ENCODE measurements at regions of chr6 and their contacts with region 1.

Region 1: GRCh38 chr6:41367700-41368099 is 32.3 kb downstream of the NCR2 start:
- DNase-seq: no peak
- H3K4me3 ChIP-seq: no peak overlapping the region
- H3K27ac ChIP-seq: no peak overlapping the region
- H3K4me1 ChIP-seq: peaks cover 0 to 3% of the 10 kb centered on the region in 2 donors
- H3K27me3 ChIP-seq: peaks cover 0 to 28% of the 10 kb centered on the region in 2 donors
- CTCF ChIP-seq: peak in 2 of 3 donors; percentile 43 to 46
- POLR2A ChIP-seq: no peak

Region 2: DNA sequence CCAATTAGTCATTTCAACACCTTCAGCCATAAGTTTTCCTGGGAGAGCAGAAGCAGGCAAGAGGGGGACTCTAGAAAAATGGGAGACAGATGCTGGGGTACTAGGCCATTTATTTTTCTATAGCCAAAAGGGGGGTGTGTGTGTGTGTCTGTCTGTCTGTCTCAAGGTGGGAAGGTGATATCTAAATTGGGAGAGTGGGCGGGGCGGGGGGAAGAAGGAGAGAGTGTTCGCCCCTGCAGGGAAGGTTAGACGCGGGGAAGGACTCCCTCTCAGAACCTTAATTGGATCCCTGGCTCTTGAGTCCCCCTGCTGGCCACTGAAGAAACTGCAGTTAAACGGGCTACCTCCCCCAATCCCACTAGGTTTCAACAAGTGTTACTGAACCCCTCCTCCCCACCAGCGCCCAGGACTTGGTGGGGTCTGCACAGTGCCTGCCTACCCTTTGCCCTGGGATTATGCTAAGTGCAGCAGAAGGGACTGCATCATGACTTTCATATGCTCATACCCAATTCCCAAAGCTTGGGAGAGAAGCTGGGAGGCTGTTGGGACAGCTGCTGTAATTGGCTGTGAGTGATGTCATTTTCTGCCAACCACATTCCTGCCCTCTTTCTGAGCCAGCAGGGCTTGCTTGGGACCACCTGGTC is 224.3 kb after region 1 on chr6:
- intact Hi-C with region 1: loop called (anchors 10 kb)
- DNase-seq: peak; percentile 56 to 81
- H3K4me3 ChIP-seq: no peak overlapping the region
- H3K27ac ChIP-seq: no peak overlapping the region
- H3K4me1 ChIP-seq: no peaks in the 10 kb centered on the region
- H3K27me3 ChIP-seq: no peaks in the 10 kb centered on the region
- CTCF ChIP-seq: peak; percentile 72 to 95 (median 95)
- POLR2A ChIP-seq: no peak

Region 3: GRCh38 chr6:41678501-41679250 is 311.0 kb after region 1 on chr6:
- intact Hi-C with region 1: loop called (anchors 2 kb)
- DNase-seq: no peak
- H3K4me3 ChIP-seq: no peak overlapping the region
- H3K27ac ChIP-seq: no peak overlapping the region
- H3K4me1 ChIP-seq: no peaks in the 10 kb centered on the region
- H3K27me3 ChIP-seq: no peaks in the 10 kb centered on the region
- CTCF ChIP-seq: no peak
- POLR2A ChIP-seq: no peak